ENCODE measurements at regions of chr4 and their contacts with region 1.

Region 1: GRCh38 chr4:147590249-147590920 is 26.8 kb upstream of the TMEM184C start:
- DNase-seq: peak; percentile 61 to 80
- H3K4me3 ChIP-seq: no peak overlapping the region
- H3K4me1 ChIP-seq: peaks cover 5% of the 10 kb centered on the region
- H3K27me3 ChIP-seq: no peaks in the 10 kb centered on the region

Region 2: GRCh38 chr4:147019061-147019460 is 571.3 kb before region 1 on chr4:
- in situ Hi-C with region 1: loop called (anchors 25 kb)
- DNase-seq: peak; percentile 5 to 69
- H3K4me3 ChIP-seq: no peak overlapping the region
- H3K4me1 ChIP-seq: no peaks in the 10 kb centered on the region
- H3K27me3 ChIP-seq: peaks cover 5% of the 10 kb centered on the region; the same call in 1 of the 2 replicates

Region 3: DNA sequence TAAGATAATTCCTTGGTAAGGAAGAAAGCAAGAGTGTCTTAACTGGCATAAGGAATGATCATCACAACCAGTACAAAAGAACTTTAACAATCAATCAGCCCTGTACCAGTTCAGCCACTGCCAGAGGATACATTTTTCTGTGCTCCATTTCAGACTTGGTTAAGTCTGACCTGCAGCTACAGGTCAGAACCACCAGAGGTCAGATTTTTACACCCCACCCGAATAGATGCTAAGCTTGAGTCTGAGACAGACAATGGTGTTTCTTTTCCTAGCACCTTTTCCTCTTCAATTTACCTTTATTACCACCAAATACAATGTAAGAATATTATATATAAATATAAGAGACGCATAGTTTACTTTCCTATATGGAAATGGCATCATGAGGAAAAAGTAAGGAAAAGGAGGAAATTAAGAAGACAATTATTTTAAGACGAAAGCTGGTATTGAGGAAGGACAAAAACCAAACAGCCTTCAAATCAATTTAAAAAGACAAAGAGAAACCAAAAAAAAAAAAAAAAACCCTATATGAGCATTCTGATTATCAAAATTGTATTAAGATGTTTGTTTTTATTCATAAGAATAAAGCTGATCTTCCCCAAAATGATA is 429.4 kb before region 1 on chr4:
- in situ Hi-C with region 1: loop called (anchors 25 kb)
- DNase-seq: peak; percentile 36 to 59
- H3K4me3 ChIP-seq: no peak overlapping the region
- H3K4me1 ChIP-seq: peaks cover 4% of the 10 kb centered on the region; the same call in 1 of the 2 replicates
- H3K27me3 ChIP-seq: peaks cover 17% of the 10 kb centered on the region

Region 4: GRCh38 chr4:147526272-147526654 is 64.1 kb before region 1 on chr4:
- in situ Hi-C with region 1: loop called (anchors 10 kb)
- DNase-seq: no peak
- H3K4me3 ChIP-seq: no peak overlapping the region
- H3K4me1 ChIP-seq: peaks cover 10% of the 10 kb centered on the region; the same call in 1 of the 2 replicates
- H3K27me3 ChIP-seq: 0 out of 2 replicates have a peak, but pooled peaks cover 2% of the 10 kb centered on the region

Region 5: GRCh38 chr4:147879676-147880075 is 289.3 kb after region 1 on chr4:
- in situ Hi-C with region 1: no loop called
- DNase-seq: no peak
- H3K4me3 ChIP-seq: no peak overlapping the region
- H3K4me1 ChIP-seq: no peaks in the 10 kb centered on the region
- H3K27me3 ChIP-seq: no peaks in the 10 kb centered on the region

Measured in HAP-1 (cell line).